Activated B cell treated with CpG ODN at 0.5 μM for 24 hours (primary cell): ENCODE measurements at regions of chr1 and their contacts with region 1.

Region 1: GRCh38 chr1:207828485-207829158 is 76.8 kb downstream of the CD46 start:
- DNase-seq: no peak
- ATAC-seq: no peak
- H3K4me3 Mint-ChIP-seq: peak overlapping the region; percentile 5
- H3K27ac Mint-ChIP-seq: peak overlapping the region; percentile 57
- H3K4me1 Mint-ChIP-seq: peaks cover 97% of the 10 kb centered on the region
- H3K27me3 Mint-ChIP-seq: peaks cover 2% of the 10 kb centered on the region
- CTCF ChIP-seq: no peak

Region 2: DNA sequence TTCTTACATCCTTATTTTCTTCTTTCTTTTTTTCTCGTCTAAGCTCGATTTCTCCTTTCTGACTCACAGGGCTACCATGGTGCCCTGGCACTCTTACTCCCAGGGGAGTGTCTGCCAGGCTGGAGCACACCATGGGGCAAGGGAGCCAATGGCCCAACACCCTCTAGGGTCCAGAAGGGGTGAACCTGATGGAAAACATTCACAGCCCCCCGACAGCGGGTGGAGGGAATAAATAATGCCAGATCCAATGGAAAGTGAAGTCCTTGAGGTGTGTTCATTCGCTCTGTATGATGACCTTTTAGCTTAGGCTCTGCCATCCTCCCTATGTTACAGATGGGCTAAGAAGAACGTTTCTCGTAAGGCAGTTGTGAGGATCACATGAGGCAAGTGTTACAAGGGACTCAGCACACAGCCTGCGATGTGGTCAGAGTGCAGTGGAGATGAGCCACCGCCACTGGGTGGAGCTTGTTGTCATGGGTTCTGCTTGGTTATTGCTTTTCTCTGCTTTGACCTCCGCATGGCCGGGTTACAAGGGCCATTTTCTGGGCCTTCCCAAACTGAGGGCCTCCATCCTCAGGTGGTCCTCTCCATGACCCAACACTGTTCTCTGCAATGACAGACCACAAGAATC is 903.4 kb before region 1 on chr1:
- CTCF ChIA-PET with region 1: no interaction called
- POLR2A ChIA-PET with region 1: no interaction called
- intact Hi-C with region 1: loop called (anchors 10 kb)
- DNase-seq: peak; percentile 63
- ATAC-seq: peak; percentile 55
- H3K4me3 Mint-ChIP-seq: no peak overlapping the region
- H3K27ac Mint-ChIP-seq: no peak overlapping the region
- H3K4me1 Mint-ChIP-seq: peaks cover 33% of the 10 kb centered on the region
- H3K27me3 Mint-ChIP-seq: no peaks in the 10 kb centered on the region
- CTCF ChIP-seq: no peak

Region 3: GRCh38 chr1:207751790-207752455 is 76.7 kb before region 1 on chr1 and contains the start of gene CD46:
- CTCF ChIA-PET with region 1: no interaction called
- POLR2A ChIA-PET with region 1: interaction called, 4 read pairs
- intact Hi-C with region 1: loop called (anchors 5 kb)
- DNase-seq: peak; percentile 89
- ATAC-seq: peak; percentile 97
- H3K4me3 Mint-ChIP-seq: peak within 1 kb of the TSS; percentile 100
- H3K27ac Mint-ChIP-seq: peak within 1 kb of the TSS; percentile 96
- H3K4me1 Mint-ChIP-seq: peaks cover 56% of the 10 kb centered on the region
- H3K27me3 Mint-ChIP-seq: no peaks in the 10 kb centered on the region
- CTCF ChIP-seq: no peak
- total RNA-seq, gene CD46: 109 and 110 TPM in 2 replicates

Region 4: GRCh38 chr1:207805841-207806421 is 22.7 kb before region 1 on chr1:
- CTCF ChIA-PET with region 1: interaction called, 17 read pairs
- POLR2A ChIA-PET with region 1: interaction called, 73 read pairs
- intact Hi-C with region 1: loop called (anchors 2 kb)
- DNase-seq: no peak
- ATAC-seq: no peak
- H3K4me3 Mint-ChIP-seq: no peak overlapping the region
- H3K27ac Mint-ChIP-seq: peak overlapping the region; percentile 84
- H3K4me1 Mint-ChIP-seq: peaks cover 50% of the 10 kb centered on the region
- H3K27me3 Mint-ChIP-seq: no peaks in the 10 kb centered on the region
- CTCF ChIP-seq: no peak

Region 5: DNA sequence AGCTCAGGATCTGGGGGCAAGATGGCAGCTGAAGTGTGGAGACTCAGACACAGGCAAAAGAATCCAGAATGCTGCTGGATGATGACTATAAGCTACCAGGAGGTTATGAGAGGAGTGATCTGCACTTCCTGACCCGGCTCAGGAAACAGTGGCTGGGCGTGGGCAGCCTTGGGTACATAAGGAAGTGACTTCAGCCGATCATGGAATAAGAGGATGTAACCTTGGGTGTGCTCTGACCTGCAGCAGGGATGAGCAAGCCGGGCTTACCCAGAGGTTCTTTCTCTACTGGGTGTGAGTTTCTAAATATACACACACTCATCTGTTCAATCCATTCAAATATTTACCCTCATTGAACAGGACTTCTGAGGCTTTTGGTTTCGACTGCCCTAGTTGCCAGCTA is 19.6 kb after region 1 on chr1:
- CTCF ChIA-PET with region 1: interaction called, 4 read pairs
- POLR2A ChIA-PET with region 1: interaction called, 3 read pairs
- intact Hi-C with region 1: loop called (anchors 2 kb)
- DNase-seq: no peak
- ATAC-seq: peak; percentile 52
- H3K4me3 Mint-ChIP-seq: no peak overlapping the region
- H3K27ac Mint-ChIP-seq: no peak overlapping the region
- H3K4me1 Mint-ChIP-seq: peaks cover 53% of the 10 kb centered on the region
- H3K27me3 Mint-ChIP-seq: no peaks in the 10 kb centered on the region
- CTCF ChIP-seq: no peak

Region 6: DNA sequence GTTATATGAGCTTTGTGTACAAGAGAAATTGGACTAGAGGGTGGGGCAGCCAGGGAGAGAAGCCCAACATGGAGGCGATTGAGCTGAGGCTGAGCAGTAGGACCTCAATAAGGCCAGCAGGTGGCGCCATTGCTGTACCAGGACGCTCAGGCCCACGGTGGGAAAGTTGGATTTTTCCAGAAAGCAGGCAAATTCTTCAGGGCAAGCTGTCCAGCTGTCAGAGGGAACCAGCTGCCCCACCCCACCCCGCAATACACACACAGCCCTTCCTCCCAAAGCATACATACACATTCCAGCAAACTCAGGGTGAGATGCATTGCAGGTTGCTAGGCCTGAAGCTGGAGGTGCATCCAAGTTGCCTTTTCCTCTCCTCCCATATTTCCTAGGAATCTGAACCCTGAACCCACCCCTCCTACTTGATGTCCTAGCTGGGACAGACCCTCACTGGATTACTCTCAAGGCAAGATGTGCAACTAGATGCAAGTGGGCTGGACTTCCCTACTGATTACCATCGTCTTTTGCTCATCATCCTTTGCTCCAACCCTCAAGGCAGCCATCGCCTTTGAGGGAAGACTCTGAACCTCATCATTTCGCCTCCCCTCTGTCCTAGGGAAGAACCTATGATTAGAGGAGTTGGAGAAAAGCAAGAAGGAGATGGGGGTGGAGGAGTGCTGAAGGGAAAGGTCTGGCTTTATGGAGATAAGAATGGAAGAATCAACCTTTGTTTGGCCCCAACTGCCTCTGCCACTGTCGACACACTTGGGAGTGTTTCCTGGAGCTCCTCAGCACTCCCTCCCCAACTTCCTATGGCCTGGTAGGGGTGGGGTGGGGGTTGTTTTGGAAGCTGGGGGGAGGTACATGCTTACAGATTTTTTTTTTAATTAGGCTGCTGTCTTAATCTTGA is 56.8 kb after region 1 on chr1:
- CTCF ChIA-PET with region 1: interaction called, 46 read pairs
- POLR2A ChIA-PET with region 1: interaction called, 37 read pairs
- intact Hi-C with region 1: no loop called
- DNase-seq: peak; percentile 51
- ATAC-seq: peak; percentile 86
- H3K4me3 Mint-ChIP-seq: no peak overlapping the region
- H3K27ac Mint-ChIP-seq: no peak overlapping the region
- H3K4me1 Mint-ChIP-seq: peaks cover 32% of the 10 kb centered on the region
- H3K27me3 Mint-ChIP-seq: peaks cover 6% of the 10 kb centered on the region
- CTCF ChIP-seq: peak; percentile 64

Region 7: GRCh38 chr1:207963427-207964194 is 135.0 kb after region 1 on chr1:
- CTCF ChIA-PET with region 1: interaction called, 17 read pairs
- POLR2A ChIA-PET with region 1: interaction called, 20 read pairs
- intact Hi-C with region 1: loop called (anchors 1 kb)
- DNase-seq: peak; percentile 89
- ATAC-seq: peak; percentile 95
- H3K4me3 Mint-ChIP-seq: peak overlapping the region; percentile 87
- H3K27ac Mint-ChIP-seq: no peak overlapping the region
- H3K4me1 Mint-ChIP-seq: peaks cover 17% of the 10 kb centered on the region
- H3K27me3 Mint-ChIP-seq: peaks cover 28% of the 10 kb centered on the region
- CTCF ChIP-seq: peak; percentile 54